Heart right ventricle (tissue), 16 donors: ENCODE measurements at regions of chr13 and their contacts with region 1.

Region 1: GRCh38 chr13:74883834-74884233 is 598.1 kb downstream of the TBC1D4 start:
- DNase-seq: no peak
- ATAC-seq: no peak
- H3K4me3 ChIP-seq: no peak overlapping the region
- H3K27ac ChIP-seq: no peak overlapping the region
- H3K4me1 ChIP-seq: no peaks in the 10 kb centered on the region
- H3K27me3 ChIP-seq: no peaks in the 10 kb centered on the region
- CTCF ChIP-seq: peak in 1 of 9 donors; percentile 11

Region 2: DNA sequence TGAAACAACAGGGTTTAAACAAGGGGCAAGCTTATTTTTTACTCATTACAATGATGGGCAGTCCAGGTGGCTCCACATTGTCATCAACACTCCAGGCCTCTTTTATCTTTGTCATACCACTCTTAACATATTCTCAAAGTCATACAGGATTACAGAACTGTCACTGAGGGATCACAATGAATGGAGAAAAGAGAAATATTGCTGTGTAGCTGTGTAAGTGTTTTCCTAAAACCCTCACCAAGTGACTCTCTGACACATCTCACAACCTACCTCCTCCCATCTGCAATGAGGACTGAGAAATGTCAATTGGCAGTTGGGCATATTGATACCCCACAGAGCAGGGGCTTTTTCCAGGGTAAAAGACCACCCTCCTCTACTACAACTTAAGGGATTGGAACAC is 36.1 kb after region 1 on chr13:
- intact Hi-C with region 1: loop called in 1 of 10 experiments (anchors 5 kb)
- DNase-seq: no peak
- ATAC-seq: no peak
- H3K4me3 ChIP-seq: no peak overlapping the region
- H3K27ac ChIP-seq: no peak overlapping the region
- H3K4me1 ChIP-seq: no peaks in the 10 kb centered on the region
- H3K27me3 ChIP-seq: no peaks in the 10 kb centered on the region
- CTCF ChIP-seq: no peak